T-cell (primary cell): ENCODE measurements at regions of chr7 and their contacts with region 1.

Region 1: GRCh38 chr7:111098011-111098925 is 7.3 kb downstream of the LRRN3 start:
- DNase-seq: peak in 34 of 35 experiments; percentile 34 to 82 (median 56)
- ATAC-seq: peak; percentile 77 to 95 (median 84)
- H3K4me3 ChIP-seq: peak overlapping the region in 1 of 2 donors; percentile 51
- H3K4me3 Mint-ChIP-seq: peak overlapping the region; percentile 43 to 95 (median 58)
- H3K27ac ChIP-seq: no peak overlapping the region
- H3K27ac Mint-ChIP-seq: peak overlapping the region; percentile 44 to 75
- H3K4me1 ChIP-seq: peaks cover 0 to 70% of the 10 kb centered on the region in 2 experiments
- H3K4me1 Mint-ChIP-seq: peaks cover 48 to 64% (median 55%) of the 10 kb centered on the region in 3 donors
- H3K27me3 ChIP-seq: no peaks in the 10 kb centered on the region
- H3K27me3 Mint-ChIP-seq: no peaks in the 10 kb centered on the region

Region 2: GRCh38 chr7:110090110-110090769 is 1008.0 kb before region 1 on chr7:
- CTCF ChIA-PET with region 1: interaction called in 1 of 2 experiments, 10 read pairs
- POLR2A ChIA-PET with region 1: no interaction called
- DNase-seq: peak in 3 of 35 experiments; percentile 1 to 37 (median 1)
- ATAC-seq: no peak
- H3K4me3 ChIP-seq: no peak overlapping the region
- H3K4me3 Mint-ChIP-seq: no peak overlapping the region
- H3K27ac ChIP-seq: no peak overlapping the region
- H3K27ac Mint-ChIP-seq: no peak overlapping the region
- H3K4me1 ChIP-seq: no peaks in the 10 kb centered on the region
- H3K4me1 Mint-ChIP-seq: no peaks in the 10 kb centered on the region
- H3K27me3 ChIP-seq: no peaks in the 10 kb centered on the region
- H3K27me3 Mint-ChIP-seq: peaks cover 0 to 15% of the 10 kb centered on the region in 2 donors

Region 3: GRCh38 chr7:110868458-110868857 is 229.8 kb before region 1 on chr7:
- CTCF ChIA-PET with region 1: interaction called in 1 of 2 experiments, 10 read pairs
- POLR2A ChIA-PET with region 1: no interaction called
- DNase-seq: no peak
- ATAC-seq: no peak
- H3K4me3 ChIP-seq: no peak overlapping the region
- H3K4me3 Mint-ChIP-seq: no peak overlapping the region
- H3K27ac ChIP-seq: no peak overlapping the region
- H3K27ac Mint-ChIP-seq: no peak overlapping the region
- H3K4me1 ChIP-seq: peaks cover 0 to 13% of the 10 kb centered on the region in 2 experiments
- H3K4me1 Mint-ChIP-seq: no peaks in the 10 kb centered on the region
- H3K27me3 ChIP-seq: no peaks in the 10 kb centered on the region
- H3K27me3 Mint-ChIP-seq: no peaks in the 10 kb centered on the region

Region 4: DNA sequence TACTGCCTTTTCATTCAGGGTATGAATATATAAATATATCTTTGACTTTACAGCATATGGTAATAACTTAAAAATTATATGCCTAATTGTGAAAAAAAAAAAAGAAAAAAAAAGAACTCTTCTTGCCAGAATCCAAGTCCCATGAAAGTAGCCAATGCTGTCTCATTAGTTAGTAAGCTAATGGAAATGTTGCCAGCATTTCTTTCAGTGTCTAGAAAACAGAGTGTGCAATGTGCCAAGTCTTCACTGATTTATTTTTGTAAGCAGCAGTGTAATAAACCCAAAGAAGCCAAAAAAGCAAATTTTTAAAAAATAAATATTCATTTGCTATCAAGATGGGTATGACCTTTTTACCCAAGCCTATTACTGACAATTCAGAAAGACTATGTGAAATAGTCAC is 38.4 kb before region 1 on chr7:
- CTCF ChIA-PET with region 1: no interaction called
- POLR2A ChIA-PET with region 1: no interaction called
- DNase-seq: no peak
- ATAC-seq: no peak
- H3K4me3 ChIP-seq: no peak overlapping the region
- H3K4me3 Mint-ChIP-seq: no peak overlapping the region
- H3K27ac ChIP-seq: no peak overlapping the region
- H3K27ac Mint-ChIP-seq: no peak overlapping the region
- H3K4me1 ChIP-seq: peaks cover 0 to 21% of the 10 kb centered on the region in 2 experiments
- H3K4me1 Mint-ChIP-seq: peaks cover 10 to 40% (median 15%) of the 10 kb centered on the region in 3 donors
- H3K27me3 ChIP-seq: no peaks in the 10 kb centered on the region
- H3K27me3 Mint-ChIP-seq: no peaks in the 10 kb centered on the region

Region 5: DNA sequence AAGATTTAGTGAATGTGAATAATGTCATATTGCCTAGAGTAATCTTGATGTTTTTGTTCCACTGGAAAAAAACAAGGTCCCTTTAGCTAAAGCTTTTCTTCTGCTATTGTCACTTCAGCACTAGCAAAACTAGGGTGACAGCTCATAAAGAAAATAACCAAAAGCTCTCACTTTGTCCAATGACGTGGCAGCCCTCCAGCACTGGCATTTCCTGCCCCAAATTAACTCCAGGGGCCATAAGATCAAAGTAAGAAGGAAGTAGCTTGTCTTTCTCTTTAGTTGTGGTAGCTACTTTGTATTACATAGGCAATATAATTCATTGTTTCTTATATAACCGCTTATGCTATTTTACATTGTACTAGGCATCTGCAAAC is 39.9 kb after region 1 on chr7:
- CTCF ChIA-PET with region 1: interaction called, 7 to 20 read pairs
- POLR2A ChIA-PET with region 1: no interaction called
- DNase-seq: peak in 34 of 35 experiments; percentile 16 to 74 (median 54)
- ATAC-seq: peak; percentile 82 to 94 (median 92)
- H3K4me3 ChIP-seq: no peak overlapping the region
- H3K4me3 Mint-ChIP-seq: peak overlapping the region in 1 of 3 donors; percentile 57
- H3K27ac ChIP-seq: peak overlapping the region; percentile 56
- H3K27ac Mint-ChIP-seq: peak overlapping the region; percentile 72 to 81
- H3K4me1 ChIP-seq: peaks cover 7 to 18% of the 10 kb centered on the region in 2 experiments
- H3K4me1 Mint-ChIP-seq: peaks cover 17 to 25% (median 22%) of the 10 kb centered on the region in 3 donors
- H3K27me3 ChIP-seq: no peaks in the 10 kb centered on the region
- H3K27me3 Mint-ChIP-seq: no peaks in the 10 kb centered on the region

Region 6: DNA sequence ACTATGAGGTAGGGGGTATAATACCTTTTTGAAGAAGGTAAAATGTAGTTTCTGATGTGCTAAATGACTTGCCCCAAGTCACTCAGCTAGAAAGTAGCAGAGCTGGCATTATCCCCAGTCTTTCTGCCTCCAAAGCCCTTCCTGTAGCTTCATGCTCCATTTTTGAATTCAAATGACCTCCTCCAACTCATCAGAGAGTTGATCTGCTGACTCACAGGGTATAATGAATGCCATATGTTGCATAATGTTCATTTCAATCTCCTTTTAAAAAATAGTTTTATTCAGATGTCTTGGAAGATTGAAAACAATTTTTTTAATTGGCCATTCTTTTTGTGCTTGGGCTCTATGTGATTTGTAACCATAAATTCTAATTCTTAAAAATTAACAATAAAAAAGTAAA is 736.8 kb after region 1 on chr7:
- CTCF ChIA-PET with region 1: no interaction called
- POLR2A ChIA-PET with region 1: no interaction called
- DNase-seq: no peak
- ATAC-seq: no peak
- H3K4me3 ChIP-seq: no peak overlapping the region
- H3K4me3 Mint-ChIP-seq: no peak overlapping the region
- H3K27ac ChIP-seq: no peak overlapping the region
- H3K27ac Mint-ChIP-seq: no peak overlapping the region
- H3K4me1 ChIP-seq: no peaks in the 10 kb centered on the region
- H3K4me1 Mint-ChIP-seq: no peaks in the 10 kb centered on the region
- H3K27me3 ChIP-seq: no peaks in the 10 kb centered on the region
- H3K27me3 Mint-ChIP-seq: peaks cover 0 to 3% of the 10 kb centered on the region in 2 donors